Esophagus muscularis mucosa (tissue), 4 donors: ENCODE measurements at regions of chr13 and their contacts with region 1.

Region 1: GRCh38 chr13:40789275-40790133 is at the start of gene SLC25A15:
- DNase-seq: no peak
- H3K4me3 ChIP-seq: peak within 1 kb of the TSS; percentile 68 to 77 (median 70)
- H3K27ac ChIP-seq: peak within 1 kb of the TSS; percentile 80 to 87 (median 83)
- H3K4me1 ChIP-seq: peaks cover 8 to 20% (median 14%) of the 10 kb centered on the region in 4 donors
- H3K27me3 ChIP-seq: no peaks in the 10 kb centered on the region
- CTCF ChIP-seq: peak; percentile 16 to 44 (median 18)
- EP300 ChIP-seq: no peak
- POLR2A ChIP-seq: no peak
- total RNA-seq, gene SLC25A15: 3.7 to 5.1 (median 4.5) TPM

Region 2: GRCh38 chr13:40922437-40923040 is 133.0 kb after region 1 on chr13:
- intact Hi-C with region 1: loop called (anchors 10 kb)
- DNase-seq: no peak
- H3K4me3 ChIP-seq: no peak overlapping the region
- H3K27ac ChIP-seq: peak overlapping the region in 1 of 4 donors; percentile 2
- H3K4me1 ChIP-seq: peaks cover 9 to 18% (median 14%) of the 10 kb centered on the region in 4 donors
- H3K27me3 ChIP-seq: no peaks in the 10 kb centered on the region
- CTCF ChIP-seq: no peak
- EP300 ChIP-seq: no peak
- POLR2A ChIP-seq: no peak

Region 3: GRCh38 chr13:41132512-41133152 is 343.1 kb after region 1 on chr13 and contains the start of gene KBTBD6:
- intact Hi-C with region 1: no loop called
- DNase-seq: peak; percentile 97
- H3K4me3 ChIP-seq: peak within 1 kb of the TSS; percentile 66 to 87 (median 83)
- H3K27ac ChIP-seq: peak within 1 kb of the TSS; percentile 83 to 94 (median 88)
- H3K4me1 ChIP-seq: peaks cover 24 to 55% (median 48%) of the 10 kb centered on the region in 4 donors
- H3K27me3 ChIP-seq: no peaks in the 10 kb centered on the region
- CTCF ChIP-seq: no peak
- EP300 ChIP-seq: no peak
- POLR2A ChIP-seq: peak; percentile 14
- total RNA-seq, gene KBTBD6: 4.6 to 9.1 (median 7.5) TPM